Common myeloid progenitor, CD34-positive (primary cell): ENCODE measurements at regions of chr16 and their contacts with region 1.

Region 1: DNA sequence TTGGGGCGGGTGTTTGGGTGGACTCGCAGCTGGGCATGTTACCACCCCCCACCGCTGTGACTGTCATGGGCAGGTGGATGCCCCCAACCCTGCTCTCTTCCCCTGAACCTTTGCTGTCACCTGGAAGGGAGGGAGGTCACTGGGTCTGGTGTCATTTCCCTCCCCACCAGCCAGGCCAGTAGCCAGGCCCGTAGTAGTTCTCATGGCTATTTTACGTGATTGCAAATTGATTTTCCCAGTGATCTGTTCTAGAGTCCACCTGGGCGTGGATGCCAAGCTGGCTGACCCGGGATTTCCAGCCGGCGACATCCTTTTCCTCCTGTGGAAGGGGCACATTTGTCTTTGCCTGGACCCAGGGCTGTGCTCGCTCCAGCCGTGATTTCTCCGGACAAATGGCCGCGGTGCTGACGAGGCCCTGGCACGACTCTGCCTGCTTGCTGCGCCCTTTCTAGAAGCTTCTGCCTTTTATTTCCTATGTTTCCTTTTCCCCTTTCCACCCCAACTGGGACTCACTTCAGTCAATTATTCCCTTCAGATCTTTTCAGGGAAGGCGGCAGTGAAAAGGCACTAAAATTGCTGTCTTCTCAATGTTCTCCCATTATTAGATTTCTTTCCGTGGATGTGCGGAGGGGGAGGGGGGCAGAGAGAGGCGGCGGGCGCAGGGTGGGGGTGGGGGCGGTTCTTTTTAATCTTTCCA is 226.9 kb upstream of the CIBAR2 start:
- DNase-seq: no peak
- H3K4me3 ChIP-seq: no peak overlapping the region
- H3K27ac ChIP-seq: no peak overlapping the region
- H3K4me1 ChIP-seq: peaks cover 1 to 23% (median 22%) of the 10 kb centered on the region in 4 experiments
- H3K27me3 ChIP-seq: no peaks in the 10 kb centered on the region

Region 2: GRCh38 chr16:84062734-84063640 is 1276.2 kb before region 1 on chr16:
- CTCF ChIA-PET with region 1: no interaction called
- POLR2A ChIA-PET with region 1: no interaction called
- DNase-seq: peak; percentile 52 to 61 (median 55)
- H3K4me3 ChIP-seq: no peak overlapping the region
- H3K27ac ChIP-seq: no peak overlapping the region
- H3K4me1 ChIP-seq: no peaks in the 10 kb centered on the region
- H3K27me3 ChIP-seq: no peaks in the 10 kb centered on the region

Region 3: GRCh38 chr16:85354686-85355514 is 15.8 kb after region 1 on chr16:
- CTCF ChIA-PET with region 1: interaction called, 11 read pairs
- POLR2A ChIA-PET with region 1: no interaction called
- DNase-seq: peak in 2 of 3 donors; percentile 78 to 82
- H3K4me3 ChIP-seq: no peak overlapping the region
- H3K27ac ChIP-seq: peak overlapping the region in 1 of 2 experiments; percentile 49
- H3K4me1 ChIP-seq: peaks cover 0 to 31% (median 10%) of the 10 kb centered on the region in 4 experiments
- H3K27me3 ChIP-seq: no peaks in the 10 kb centered on the region